Activated naive CD4-positive, alpha-beta T cell treated with anti-CD3 and anti-CD28 coated beads, Interleukin-2, amount 10 ng/mL, durations not matched to agents 7 days and 5 days (primary cell): ENCODE measurements at regions of chr22 and their contacts with region 1.

Region 1: DNA sequence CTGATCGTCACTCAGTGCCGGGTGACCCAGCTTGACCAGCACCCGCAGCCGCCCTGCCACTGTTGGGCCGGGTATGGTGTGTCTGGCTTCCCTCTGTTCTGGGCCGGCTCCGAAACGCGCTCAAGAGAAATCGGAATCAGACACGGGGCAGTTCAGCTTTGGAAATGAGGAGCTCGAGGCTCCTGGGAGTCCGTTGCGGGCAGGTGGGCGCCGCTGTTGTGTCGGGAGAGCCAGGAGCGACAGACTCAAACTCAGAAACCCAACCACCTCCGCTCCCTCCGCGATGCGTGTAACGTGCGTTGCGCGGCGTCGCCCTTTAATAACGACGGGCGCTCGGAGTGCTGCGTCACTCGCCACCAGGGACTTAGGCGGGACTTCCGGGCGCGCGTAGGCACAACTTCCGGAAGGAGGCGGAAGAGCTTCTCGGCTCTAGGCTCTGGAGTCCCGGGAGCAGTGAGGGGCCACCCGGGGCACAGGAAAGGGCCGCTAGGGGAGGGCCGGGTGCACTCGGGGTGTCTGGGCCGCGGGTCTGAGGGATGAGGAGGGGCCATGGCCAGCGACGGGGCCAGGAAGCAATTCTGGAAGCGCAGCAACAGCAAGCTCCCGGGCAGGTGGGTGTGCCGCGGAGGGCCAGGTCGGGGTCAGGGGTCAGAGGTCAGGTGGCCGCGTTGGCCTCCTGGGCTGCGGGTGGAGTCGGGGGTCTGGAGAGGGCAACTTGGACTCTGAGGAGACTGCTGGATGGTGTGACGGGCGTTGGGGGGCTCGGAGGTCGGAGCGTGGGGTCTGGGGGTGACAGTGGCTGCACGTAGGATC is at the start of gene TBC1D22A:
- DNase-seq: peak; percentile 96
- H3K4me3 Mint-ChIP-seq: peak within 1 kb of the TSS; percentile 99
- H3K27ac Mint-ChIP-seq: peak within 1 kb of the TSS; percentile 98
- H3K4me1 Mint-ChIP-seq: peaks cover 58% of the 10 kb centered on the region
- H3K27me3 Mint-ChIP-seq: no peaks in the 10 kb centered on the region

Region 2: GRCh38 chr22:46696229-46696518 is 66.3 kb before region 1 on chr22:
- CTCF ChIA-PET with region 1: no interaction called
- DNase-seq: no peak
- H3K4me3 Mint-ChIP-seq: no peak overlapping the region
- H3K27ac Mint-ChIP-seq: no peak overlapping the region
- H3K4me1 Mint-ChIP-seq: no peaks in the 10 kb centered on the region
- H3K27me3 Mint-ChIP-seq: no peaks in the 10 kb centered on the region

Region 3: DNA sequence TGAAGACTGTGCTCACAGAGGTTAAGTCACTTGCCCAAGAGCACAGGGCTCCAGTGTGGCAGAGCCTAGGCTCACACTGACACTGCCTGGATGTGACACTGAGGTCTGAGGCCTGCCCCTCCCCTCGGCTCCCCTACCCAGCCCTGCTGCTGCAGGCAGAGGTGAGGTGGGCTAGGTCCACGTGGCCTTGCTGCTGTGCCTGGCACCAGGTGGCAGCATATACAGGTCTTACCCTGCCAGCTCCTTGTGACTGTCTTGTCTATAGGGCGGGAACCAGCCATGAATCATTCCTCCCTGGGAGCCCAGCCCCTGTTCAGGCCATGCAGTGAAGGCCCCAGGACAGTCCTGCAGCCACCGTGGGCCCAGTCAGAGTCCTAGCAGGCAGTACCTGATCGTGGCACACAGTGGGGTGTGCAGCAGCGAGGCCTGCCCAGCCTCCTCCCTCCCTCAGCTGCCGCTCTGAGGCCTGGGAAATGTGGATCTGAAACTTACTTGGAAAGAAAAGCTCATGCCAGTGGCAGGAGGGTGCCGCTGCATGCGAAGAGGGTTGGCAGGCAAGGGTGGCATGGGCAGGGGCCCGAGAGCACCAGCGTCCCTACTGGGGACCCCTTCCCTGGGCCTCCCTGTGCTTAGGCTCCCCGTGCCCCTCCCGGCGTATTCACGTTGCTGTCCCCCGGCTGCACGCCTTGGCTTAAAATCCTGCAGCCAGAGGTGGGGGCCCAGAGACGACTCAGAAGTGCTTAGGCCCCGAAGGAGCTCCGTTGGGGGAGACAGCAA is 23.2 kb before region 1 on chr22:
- CTCF ChIA-PET with region 1: interaction called, 10 read pairs
- DNase-seq: peak; percentile 78
- H3K4me3 Mint-ChIP-seq: peak overlapping the region; percentile 86
- H3K27ac Mint-ChIP-seq: peak overlapping the region; percentile 93
- H3K4me1 Mint-ChIP-seq: peaks cover 44% of the 10 kb centered on the region
- H3K27me3 Mint-ChIP-seq: no peaks in the 10 kb centered on the region

Region 4: DNA sequence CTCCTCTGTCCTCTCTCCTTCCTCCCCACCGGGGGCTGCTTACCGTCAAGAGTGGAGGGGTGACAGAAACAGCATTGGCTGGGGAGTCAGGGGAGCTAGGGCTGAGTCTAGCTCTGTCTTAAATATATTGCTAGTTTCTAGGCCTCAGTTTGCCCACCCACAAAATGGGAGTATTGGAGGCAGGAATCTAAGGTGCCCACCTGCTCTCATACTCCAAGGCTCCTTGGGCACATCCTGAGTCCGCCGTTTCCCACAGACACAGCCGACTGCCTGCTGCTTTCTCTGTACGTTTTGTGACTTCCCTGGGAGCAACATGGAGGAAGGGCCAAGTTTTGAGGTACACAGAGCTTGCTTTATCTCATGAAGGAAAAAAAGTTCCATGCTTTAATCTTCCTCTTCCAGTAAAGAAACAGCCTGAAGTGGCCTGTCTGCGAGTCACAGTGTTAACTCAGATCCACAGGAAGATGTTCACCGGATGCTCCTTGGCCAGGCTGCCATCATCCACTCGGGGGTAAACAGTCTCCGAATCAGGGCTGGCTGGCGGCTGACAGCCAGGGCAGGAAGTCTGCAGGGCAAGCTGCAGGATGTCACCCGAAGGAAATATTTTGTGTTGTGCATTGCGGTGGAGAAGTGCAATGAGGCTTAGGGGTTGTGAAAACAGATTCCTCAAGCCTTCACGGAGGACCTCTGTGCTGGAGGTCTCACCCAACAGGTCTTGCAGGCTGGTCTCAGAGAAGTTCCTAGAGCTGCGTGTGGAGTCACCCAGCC is 13.4 kb before region 1 on chr22:
- CTCF ChIA-PET with region 1: interaction called, 27 read pairs
- DNase-seq: peak; percentile 77
- H3K4me3 Mint-ChIP-seq: peak overlapping the region; percentile 64
- H3K27ac Mint-ChIP-seq: peak overlapping the region; percentile 95
- H3K4me1 Mint-ChIP-seq: peaks cover 29% of the 10 kb centered on the region
- H3K27me3 Mint-ChIP-seq: peaks cover 4% of the 10 kb centered on the region

Region 5: GRCh38 chr22:46798366-46799350 is 36.2 kb after region 1 on chr22:
- CTCF ChIA-PET with region 1: interaction called, 159 read pairs
- DNase-seq: peak; percentile 79
- H3K4me3 Mint-ChIP-seq: no peak overlapping the region
- H3K27ac Mint-ChIP-seq: peak overlapping the region; percentile 78
- H3K4me1 Mint-ChIP-seq: peaks cover 21% of the 10 kb centered on the region
- H3K27me3 Mint-ChIP-seq: no peaks in the 10 kb centered on the region